ENCODE measurements at regions of chr16 and their contacts with region 1.

Region 1: GRCh38 chr16:19886073-19886941 is 1.7 kb upstream of the GPRC5B start:
- DNase-seq: peak; percentile 85
- ATAC-seq: peak; percentile 60

Region 2: GRCh38 chr16:19067349-19068236 is 818.7 kb before region 1 on chr16 and contains the start of gene COQ7:
- intact Hi-C with region 1: loop called (anchors 10 kb)
- DNase-seq: peak; percentile 99
- ATAC-seq: peak; percentile 99
- total RNA-seq, gene COQ7: 39.4 TPM

Region 3: DNA sequence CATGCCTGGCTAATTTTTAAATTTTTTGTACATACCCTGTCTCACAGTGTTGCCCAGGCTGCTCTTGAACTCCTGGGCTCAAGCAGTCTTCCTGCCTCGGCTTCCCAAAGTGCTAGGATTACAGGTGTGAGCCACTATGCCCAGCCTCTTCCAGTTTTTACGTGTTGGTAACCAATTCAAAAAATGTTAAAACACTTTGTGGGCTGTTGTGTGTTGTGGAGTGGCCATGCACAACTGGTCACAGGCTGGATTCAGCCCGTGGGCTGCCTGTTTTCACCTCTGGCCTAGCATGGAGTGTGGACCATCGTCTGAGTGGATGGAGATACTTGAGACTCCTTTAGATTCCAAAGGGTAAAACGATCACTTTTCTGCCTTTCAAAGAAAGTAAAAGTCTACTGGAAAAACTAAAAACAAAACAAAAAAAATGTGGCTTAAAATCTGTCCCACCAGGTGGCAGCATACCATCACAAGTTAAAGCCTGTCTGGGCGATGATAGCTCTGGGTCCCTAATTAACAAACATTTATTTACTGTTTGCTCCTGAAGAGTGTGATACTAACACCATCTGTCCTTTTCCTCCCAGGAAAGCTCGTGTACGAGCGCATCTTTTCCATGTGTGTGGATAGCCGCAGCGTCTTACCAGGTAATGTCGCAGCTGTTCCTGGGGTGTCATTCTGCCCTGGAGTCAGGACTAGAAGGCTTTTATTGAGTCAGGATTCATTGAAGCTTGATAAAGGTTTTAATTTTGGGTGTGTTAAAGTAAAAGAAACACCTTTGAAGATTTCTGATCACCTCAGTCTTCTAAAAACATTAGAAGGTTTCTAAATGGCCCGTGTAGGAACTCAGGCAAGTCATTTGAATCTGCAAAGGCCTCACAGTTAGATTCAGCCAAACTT is 285.0 kb before region 1 on chr16:
- intact Hi-C with region 1: loop called (anchors 2 kb)
- DNase-seq: no peak
- ATAC-seq: peak; percentile 43

Region 4: DNA sequence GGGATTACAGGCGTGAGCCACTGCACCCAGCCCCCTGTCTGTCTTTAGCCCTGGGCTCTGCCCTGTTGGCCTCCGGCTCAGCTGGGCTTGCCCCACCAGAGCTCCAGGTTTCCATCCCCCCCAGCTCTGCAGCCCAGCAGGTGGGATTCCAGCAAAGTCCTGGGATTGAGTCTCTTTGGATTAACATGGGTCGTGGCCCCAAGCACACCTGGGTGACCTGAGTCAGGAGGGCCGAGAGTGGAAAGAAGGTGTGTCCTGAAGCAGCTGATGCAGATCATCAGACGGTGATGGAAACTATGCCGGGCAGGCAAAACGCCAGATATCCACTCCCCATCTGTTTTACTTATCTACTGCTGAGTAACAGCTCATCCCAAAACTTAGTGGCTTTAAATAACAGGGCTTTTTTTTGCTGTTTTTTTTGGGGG is 240.7 kb before region 1 on chr16:
- intact Hi-C with region 1: loop called (anchors 10 kb)
- DNase-seq: peak; percentile 68
- ATAC-seq: peak; percentile 78

Measured in Right ventricle myocardium superior (tissue), 1 donor.